Mammary epithelial cell (primary cell): ENCODE measurements at regions of chr18 and their contacts with region 1.

Region 1: GRCh38 chr18:76492669-76493212 is 2.3 kb downstream of the ZNF516 start:
- DNase-seq: peak; percentile 98
- H3K4me3 ChIP-seq: peak overlapping the region; percentile 83 to 94 (median 92)
- H3K27ac ChIP-seq: peak overlapping the region; percentile 77
- H3K4me1 ChIP-seq: peaks cover 20% of the 10 kb centered on the region
- H3K27me3 ChIP-seq: no peaks in the 10 kb centered on the region
- CTCF ChIP-seq: no peak

Region 2: GRCh38 chr18:76398896-76399612 is 93.7 kb before region 1 on chr18:
- CTCF ChIA-PET with region 1: no interaction called
- dilution Hi-C with region 1: no loop called
- in situ Hi-C with region 1: no loop called
- intact Hi-C with region 1: loop called (anchors 2 kb)
- DNase-seq: peak; percentile 58
- H3K4me3 ChIP-seq: no peak overlapping the region
- H3K27ac ChIP-seq: no peak overlapping the region
- H3K4me1 ChIP-seq: peaks cover 12% of the 10 kb centered on the region
- H3K27me3 ChIP-seq: no peaks in the 10 kb centered on the region
- CTCF ChIP-seq: peak; percentile 97 to 98

Region 3: DNA sequence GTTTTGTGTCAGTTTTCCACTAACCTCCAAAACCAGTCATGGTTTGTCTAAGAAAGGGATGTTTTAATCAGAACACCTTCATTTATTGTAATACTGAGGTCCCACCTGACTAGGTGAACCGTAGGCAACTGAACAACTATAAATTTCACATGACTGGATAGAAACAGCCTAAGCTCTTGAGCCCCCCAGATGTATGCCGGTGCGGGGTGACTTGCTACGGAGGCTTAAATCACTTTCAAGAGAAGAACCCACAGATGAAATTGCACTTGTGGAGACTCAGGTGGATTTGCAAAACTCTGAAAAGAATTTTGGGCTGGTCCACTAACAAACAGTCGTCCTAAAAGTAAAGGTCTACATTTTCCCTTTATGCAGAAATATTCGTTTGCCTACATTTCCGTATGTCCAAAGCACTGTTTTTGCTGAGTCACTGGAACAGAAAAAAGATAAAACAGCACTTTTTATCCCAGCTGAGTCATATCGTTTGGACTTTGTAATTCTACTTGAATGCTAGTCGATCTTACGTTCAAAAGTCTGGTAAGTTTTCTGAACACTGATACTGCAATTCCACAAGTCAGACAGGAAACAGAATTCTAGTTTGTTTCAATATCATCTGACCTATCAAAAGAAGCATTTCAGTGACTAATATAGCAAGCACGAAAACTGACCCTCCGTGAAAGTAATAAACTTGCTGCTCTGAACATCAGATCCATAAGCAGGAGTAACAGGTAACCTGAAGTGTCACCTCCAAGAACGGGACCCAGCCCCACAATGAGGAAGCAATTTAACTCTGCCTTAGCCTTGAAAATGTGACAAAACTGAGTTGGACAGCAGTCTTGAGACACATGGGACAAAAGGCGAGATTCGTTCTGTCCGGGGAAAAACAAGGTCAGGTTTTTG is 15.8 kb before region 1 on chr18:
- CTCF ChIA-PET with region 1: interaction called, 13 read pairs
- dilution Hi-C with region 1: no loop called
- in situ Hi-C with region 1: no loop called
- intact Hi-C with region 1: no loop called
- DNase-seq: no peak
- H3K4me3 ChIP-seq: no peak overlapping the region
- H3K27ac ChIP-seq: no peak overlapping the region
- H3K4me1 ChIP-seq: no peaks in the 10 kb centered on the region
- H3K27me3 ChIP-seq: no peaks in the 10 kb centered on the region
- CTCF ChIP-seq: no peak

Region 4: DNA sequence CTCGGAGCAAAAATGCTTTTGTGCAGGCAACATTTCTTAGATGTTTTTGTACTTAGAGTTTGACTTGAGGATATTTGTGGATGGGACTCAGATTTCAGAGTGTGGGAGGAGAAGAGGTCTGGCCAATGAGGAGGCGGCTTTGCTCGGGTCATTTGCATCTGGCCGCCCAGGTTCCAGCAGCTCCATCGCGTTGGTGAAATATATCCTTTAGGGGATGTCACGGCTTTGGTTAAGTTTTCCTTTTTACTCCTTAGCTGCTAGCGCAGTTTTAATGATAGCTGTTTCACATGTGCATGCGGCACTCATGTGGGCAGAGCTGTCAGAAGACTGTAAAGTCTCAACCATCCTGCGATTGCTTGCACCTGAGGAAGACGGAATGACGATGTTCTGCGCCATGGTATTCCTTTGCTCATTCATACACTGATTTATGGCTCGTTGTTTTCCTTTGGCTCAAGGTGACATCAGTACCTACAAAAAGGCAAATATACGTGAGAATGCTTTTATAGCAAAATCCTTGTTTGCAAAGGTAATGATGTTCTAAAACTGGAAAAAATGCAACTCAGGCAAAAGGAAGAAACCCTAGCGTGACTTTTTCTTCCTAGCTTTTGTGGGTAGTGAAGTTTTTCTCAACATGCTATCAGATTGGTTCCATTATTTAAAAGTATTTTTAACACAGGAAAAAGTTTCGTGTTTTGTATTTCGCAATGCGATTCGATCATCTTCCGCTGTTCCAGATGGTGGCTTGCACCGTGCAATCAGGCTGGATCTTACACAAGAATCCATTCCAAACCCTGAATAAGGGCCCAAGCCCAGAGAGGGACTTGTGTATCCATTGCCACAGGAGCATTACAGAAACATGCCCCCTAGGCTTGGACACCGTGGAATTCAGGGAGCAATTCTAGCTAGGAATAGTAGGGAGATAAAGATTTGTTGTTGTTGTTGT is 72.8 kb after region 1 on chr18:
- CTCF ChIA-PET with region 1: interaction called, 3 read pairs
- dilution Hi-C with region 1: no loop called
- in situ Hi-C with region 1: no loop called
- intact Hi-C with region 1: loop called (anchors 2 kb)
- DNase-seq: peak; percentile 92
- H3K4me3 ChIP-seq: peak overlapping the region; percentile 34 to 54 (median 37)
- H3K27ac ChIP-seq: peak overlapping the region; percentile 92
- H3K4me1 ChIP-seq: peaks cover 36% of the 10 kb centered on the region
- H3K27me3 ChIP-seq: no peaks in the 10 kb centered on the region
- CTCF ChIP-seq: no peak